CD4-positive, alpha-beta memory T cell (primary cell): ENCODE measurements at regions of chr22 and their contacts with region 1.

Region 1: GRCh38 chr22:43993027-43993760 is 30.9 kb upstream of the PARVB start:
- DNase-seq: peak; percentile 53 to 60 (median 54)
- H3K4me3 ChIP-seq: no peak overlapping the region
- H3K4me3 Mint-ChIP-seq: peak overlapping the region in 5 of 8 donors; percentile 22 to 68 (median 46)
- H3K27ac ChIP-seq: no peak overlapping the region
- H3K27ac Mint-ChIP-seq: peak overlapping the region in 6 of 7 donors; percentile 44 to 89 (median 58)
- H3K4me1 ChIP-seq: peaks cover 11% of the 10 kb centered on the region
- H3K4me1 Mint-ChIP-seq: peaks cover 11 to 36% (median 26%) of the 10 kb centered on the region in 4 donors
- H3K27me3 ChIP-seq: no peaks in the 10 kb centered on the region
- H3K27me3 Mint-ChIP-seq: no peaks in the 10 kb centered on the region

Region 2: GRCh38 chr22:44003405-44004103 is 10.4 kb after region 1 on chr22:
- CTCF ChIA-PET with region 1: interaction called, 28 read pairs
- POLR2A ChIA-PET with region 1: no interaction called
- intact Hi-C with region 1: no loop called
- DNase-seq: no peak
- H3K4me3 ChIP-seq: no peak overlapping the region
- H3K4me3 Mint-ChIP-seq: no peak overlapping the region
- H3K27ac ChIP-seq: no peak overlapping the region
- H3K27ac Mint-ChIP-seq: no peak overlapping the region
- H3K4me1 ChIP-seq: no peaks in the 10 kb centered on the region
- H3K4me1 Mint-ChIP-seq: peaks cover 0 to 1% (median 0%) of the 10 kb centered on the region in 4 donors
- H3K27me3 ChIP-seq: no peaks in the 10 kb centered on the region
- H3K27me3 Mint-ChIP-seq: no peaks in the 10 kb centered on the region

Region 3: GRCh38 chr22:44080936-44081861 is 88.0 kb after region 1 on chr22:
- CTCF ChIA-PET with region 1: interaction called, 157 read pairs
- POLR2A ChIA-PET with region 1: interaction called, 13 read pairs
- intact Hi-C with region 1: loop called (anchors 1 kb)
- DNase-seq: peak; percentile 52 to 63 (median 59)
- H3K4me3 ChIP-seq: no peak overlapping the region
- H3K4me3 Mint-ChIP-seq: no peak overlapping the region
- H3K27ac ChIP-seq: no peak overlapping the region
- H3K27ac Mint-ChIP-seq: no peak overlapping the region
- H3K4me1 ChIP-seq: peaks cover 4% of the 10 kb centered on the region
- H3K4me1 Mint-ChIP-seq: no peaks in the 10 kb centered on the region
- H3K27me3 ChIP-seq: no peaks in the 10 kb centered on the region
- H3K27me3 Mint-ChIP-seq: no peaks in the 10 kb centered on the region

Region 4: GRCh38 chr22:44108806-44109385 is 115.7 kb after region 1 on chr22:
- CTCF ChIA-PET with region 1: no interaction called
- POLR2A ChIA-PET with region 1: no interaction called
- intact Hi-C with region 1: no loop called
- DNase-seq: no peak
- H3K4me3 ChIP-seq: no peak overlapping the region
- H3K4me3 Mint-ChIP-seq: no peak overlapping the region
- H3K27ac ChIP-seq: no peak overlapping the region
- H3K27ac Mint-ChIP-seq: no peak overlapping the region
- H3K4me1 ChIP-seq: no peaks in the 10 kb centered on the region
- H3K4me1 Mint-ChIP-seq: peaks cover 0 to 10% (median 0%) of the 10 kb centered on the region in 4 donors
- H3K27me3 ChIP-seq: no peaks in the 10 kb centered on the region
- H3K27me3 Mint-ChIP-seq: no peaks in the 10 kb centered on the region

Region 5: GRCh38 chr22:44567846-44568493 is 574.8 kb after region 1 on chr22:
- CTCF ChIA-PET with region 1: interaction called, 47 read pairs
- POLR2A ChIA-PET with region 1: no interaction called
- intact Hi-C with region 1: no loop called
- DNase-seq: peak in 4 of 5 donors; percentile 30 to 39 (median 34)
- H3K4me3 ChIP-seq: no peak overlapping the region
- H3K4me3 Mint-ChIP-seq: no peak overlapping the region
- H3K27ac ChIP-seq: no peak overlapping the region
- H3K27ac Mint-ChIP-seq: no peak overlapping the region
- H3K4me1 ChIP-seq: no peaks in the 10 kb centered on the region
- H3K4me1 Mint-ChIP-seq: no peaks in the 10 kb centered on the region
- H3K27me3 ChIP-seq: no peaks in the 10 kb centered on the region
- H3K27me3 Mint-ChIP-seq: peaks cover 9 to 10% of the 10 kb centered on the region in 2 donors

Region 6: GRCh38 chr22:44684506-44685383 is 691.6 kb after region 1 on chr22:
- CTCF ChIA-PET with region 1: interaction called, 13 read pairs
- POLR2A ChIA-PET with region 1: no interaction called
- intact Hi-C with region 1: no loop called
- DNase-seq: peak; percentile 83 to 88 (median 83)
- H3K4me3 ChIP-seq: peak overlapping the region in 1 of 2 donors; percentile 29
- H3K4me3 Mint-ChIP-seq: peak overlapping the region; percentile 4 to 82 (median 67)
- H3K27ac ChIP-seq: peak overlapping the region; percentile 19
- H3K27ac Mint-ChIP-seq: peak overlapping the region; percentile 66 to 97 (median 91)
- H3K4me1 ChIP-seq: peaks cover 56% of the 10 kb centered on the region
- H3K4me1 Mint-ChIP-seq: peaks cover 18 to 59% (median 38%) of the 10 kb centered on the region in 4 donors
- H3K27me3 ChIP-seq: no peaks in the 10 kb centered on the region
- H3K27me3 Mint-ChIP-seq: no peaks in the 10 kb centered on the region